Ovary (tissue), 10 donors: ENCODE measurements at regions of chr3 and their contacts with region 1.

Region 1: GRCh38 chr3:130626049-130626448 is 109.1 kb downstream of the COL6A6 start:
- DNase-seq: no peak
- H3K4me3 ChIP-seq: no peak overlapping the region
- H3K27ac ChIP-seq: no peak overlapping the region
- H3K4me1 ChIP-seq: peaks cover 9% of the 10 kb centered on the region
- H3K27me3 ChIP-seq: no peaks in the 10 kb centered on the region
- CTCF ChIP-seq: no peak
- EP300 ChIP-seq: no peak
- POLR2A ChIP-seq: no peak

Region 2: DNA sequence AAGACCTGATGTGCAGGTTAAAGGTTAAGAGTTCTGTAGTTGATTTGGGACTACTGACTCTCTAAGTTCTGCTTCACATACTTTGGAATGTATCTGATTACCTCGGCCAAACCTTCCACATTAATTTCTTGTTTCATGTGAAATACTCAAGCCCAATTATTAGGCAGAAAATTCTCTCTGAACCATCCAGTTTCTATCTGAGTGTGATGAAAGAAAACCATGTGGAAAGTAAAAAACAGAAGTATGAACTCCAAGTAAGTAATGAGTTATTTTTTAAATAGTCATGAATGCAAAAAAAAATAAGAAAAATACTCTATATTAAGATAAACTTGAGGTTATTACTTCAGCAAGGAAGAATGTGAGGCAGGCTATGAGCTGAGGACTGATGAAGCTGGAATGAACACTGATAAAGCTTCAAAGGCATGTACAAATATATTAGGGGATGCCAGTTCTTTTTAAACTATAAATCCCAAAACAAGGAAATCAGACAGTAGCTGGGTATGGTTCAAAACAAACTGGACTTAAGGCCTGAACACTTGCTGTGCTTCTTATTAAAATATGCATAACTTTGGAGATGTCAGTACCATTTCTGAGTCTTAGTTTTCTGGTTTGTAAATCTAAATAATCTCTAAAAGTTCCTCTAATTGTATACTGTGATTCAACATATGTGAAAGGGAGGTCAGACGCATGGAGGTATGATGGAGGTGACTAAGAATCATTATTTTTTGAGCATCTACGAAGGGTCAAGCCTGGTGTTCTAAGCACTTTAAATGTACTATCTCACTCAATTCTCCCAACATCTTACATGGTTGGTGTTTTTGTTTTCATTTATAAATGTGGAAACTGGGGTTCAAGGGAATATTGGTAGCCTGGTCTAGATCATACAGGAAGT is 49.4 kb before region 1 on chr3:
- intact Hi-C with region 1: loop called in 1 of 4 experiments (anchors 10 kb)
- DNase-seq: no peak
- H3K4me3 ChIP-seq: no peak overlapping the region
- H3K27ac ChIP-seq: no peak overlapping the region
- H3K4me1 ChIP-seq: peaks cover 3% of the 10 kb centered on the region
- H3K27me3 ChIP-seq: no peaks in the 10 kb centered on the region
- CTCF ChIP-seq: no peak
- EP300 ChIP-seq: no peak
- POLR2A ChIP-seq: no peak